Activated CD4-positive, alpha-beta T cell treated with anti-CD3 and anti-CD28 coated beads, Interleukin-2, amount 10 ng/mL, durations not matched to agents 7 days and 5 days (primary cell): ENCODE measurements at regions of chr4 and their contacts with region 1.

Region 1: DNA sequence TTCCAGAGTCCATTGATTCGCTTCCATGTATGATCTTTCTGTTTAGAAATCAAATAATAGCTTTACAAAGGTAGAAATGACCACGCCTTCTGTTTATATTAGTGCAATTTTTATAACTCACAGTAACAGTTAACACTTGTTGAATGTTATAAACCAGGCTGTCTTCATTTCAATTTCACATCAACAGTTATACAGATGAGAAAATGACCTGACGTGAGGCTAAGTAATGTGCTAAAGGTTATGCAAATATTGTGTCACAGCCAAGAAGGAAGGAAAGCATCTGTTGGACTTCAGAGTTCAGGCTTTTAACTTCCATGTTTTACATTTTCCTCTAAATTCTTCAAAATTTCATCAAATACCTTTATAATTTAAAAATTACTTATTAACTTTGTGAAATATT is 13.9 kb downstream of the CASP3 start:
- DNase-seq: no peak
- H3K4me3 Mint-ChIP-seq: no peak overlapping the region
- H3K27ac Mint-ChIP-seq: no peak overlapping the region
- H3K4me1 Mint-ChIP-seq: peaks cover 32% of the 10 kb centered on the region
- H3K27me3 Mint-ChIP-seq: no peaks in the 10 kb centered on the region

Region 2: DNA sequence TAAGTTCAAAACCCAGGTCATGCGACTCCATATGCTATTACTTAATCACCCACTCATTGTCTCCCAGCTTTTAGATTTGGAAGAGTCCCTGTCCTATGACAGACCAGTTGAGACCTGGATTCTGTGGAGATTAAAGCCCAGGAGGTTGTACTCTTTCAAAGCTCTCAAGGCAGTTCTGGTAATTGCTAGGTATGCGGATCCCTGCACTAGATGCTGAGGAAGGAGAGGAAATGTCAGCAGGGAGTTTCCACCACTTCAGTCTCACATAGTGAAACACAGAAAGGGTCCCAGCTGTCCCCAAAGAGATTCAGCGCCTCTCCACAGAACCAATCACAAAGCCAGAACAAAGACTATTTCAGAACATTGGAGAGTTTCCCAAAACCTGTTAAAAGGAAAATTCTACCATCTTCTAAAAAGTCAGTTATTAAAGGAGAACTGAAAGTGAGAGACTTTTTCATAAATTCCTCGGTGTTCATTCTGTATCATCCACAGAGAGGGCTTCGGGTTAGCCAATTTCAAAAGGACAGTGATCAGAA is 214.4 kb before region 1 on chr4:
- CTCF ChIA-PET with region 1: no interaction called
- POLR2A ChIA-PET with region 1: no interaction called
- DNase-seq: no peak
- H3K4me3 Mint-ChIP-seq: peak overlapping the region; percentile 52
- H3K27ac Mint-ChIP-seq: peak overlapping the region; percentile 75
- H3K4me1 Mint-ChIP-seq: peaks cover 73% of the 10 kb centered on the region
- H3K27me3 Mint-ChIP-seq: no peaks in the 10 kb centered on the region

Region 3: DNA sequence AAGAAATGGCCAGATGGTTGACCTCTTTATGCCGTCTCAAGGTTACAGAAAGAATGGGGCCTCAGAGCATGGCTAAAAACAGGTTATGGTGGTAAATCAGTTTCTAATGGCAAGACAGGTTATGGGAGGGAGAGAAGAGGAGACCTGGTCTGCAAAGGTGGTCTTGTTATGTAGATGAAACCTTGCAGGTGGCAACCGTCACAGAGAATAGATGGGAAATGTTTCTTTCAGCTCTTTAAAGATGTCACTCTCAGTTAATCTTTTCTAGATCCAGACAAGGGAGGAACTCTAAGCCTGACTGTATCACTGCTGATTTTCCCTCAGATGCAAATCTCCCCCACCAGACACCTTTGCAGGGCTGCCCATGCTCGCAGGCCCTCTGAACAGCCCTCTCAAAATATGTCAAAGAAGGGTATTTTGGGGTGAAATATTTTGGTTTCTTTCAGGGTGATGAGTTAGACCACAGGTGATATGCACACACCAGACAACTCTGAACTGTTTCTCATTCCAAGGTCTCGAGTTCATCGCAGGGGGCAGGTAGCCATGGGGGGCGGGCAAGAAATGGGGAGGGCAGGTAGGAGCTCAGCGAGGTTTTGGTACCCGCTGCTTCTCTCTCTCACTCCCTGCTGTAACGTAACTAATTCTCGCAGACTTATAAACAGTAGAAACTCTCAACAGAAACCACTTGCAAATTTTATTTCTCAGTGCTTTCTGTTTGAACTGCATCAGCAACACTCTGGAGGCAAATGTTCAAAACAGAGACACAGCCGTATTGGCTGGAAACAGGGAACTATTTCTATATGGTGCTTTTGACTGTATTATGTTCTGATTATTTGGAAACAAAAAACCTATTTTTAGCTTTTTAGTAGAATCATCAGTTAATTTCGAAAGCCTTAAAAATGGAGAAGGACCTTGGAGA is 18.5 kb before region 1 on chr4:
- CTCF ChIA-PET with region 1: interaction called, 11 read pairs
- POLR2A ChIA-PET with region 1: no interaction called
- DNase-seq: no peak
- H3K4me3 Mint-ChIP-seq: no peak overlapping the region
- H3K27ac Mint-ChIP-seq: no peak overlapping the region
- H3K4me1 Mint-ChIP-seq: no peaks in the 10 kb centered on the region
- H3K27me3 Mint-ChIP-seq: no peaks in the 10 kb centered on the region